ENCODE measurements at regions of chr3 and their contacts with region 1.

Region 1: GRCh38 chr3:88203642-88204055 is 53.9 kb downstream of the C3orf38 start:
- DNase-seq: peak; percentile 71 to 78
- H3K4me3 ChIP-seq: no peak overlapping the region
- H3K27ac ChIP-seq: no peak overlapping the region
- H3K4me1 ChIP-seq: no peaks in the 10 kb centered on the region
- H3K27me3 ChIP-seq: no peaks in the 10 kb centered on the region
- CTCF ChIP-seq: peak; percentile 61 to 81

Region 2: DNA sequence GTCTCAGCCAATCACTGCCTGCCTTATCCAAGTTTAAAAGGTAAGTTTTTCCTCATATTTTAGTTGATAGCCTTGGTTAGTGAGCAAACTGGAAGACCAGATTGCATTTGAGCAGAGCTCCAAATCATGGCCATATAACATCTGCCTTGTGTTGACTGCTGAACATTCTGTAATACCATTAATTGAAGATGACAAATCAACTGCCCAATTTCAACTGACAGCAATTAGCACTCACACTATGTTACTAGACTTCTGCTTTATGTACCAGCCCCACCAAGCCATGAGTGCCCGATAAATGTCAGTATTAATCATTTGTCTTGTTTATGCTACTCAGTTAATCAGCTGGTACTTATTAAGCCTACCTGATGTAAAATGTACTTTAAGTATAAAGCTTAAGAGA is 227.9 kb before region 1 on chr3:
- intact Hi-C with region 1: no loop called
- DNase-seq: no peak
- H3K4me3 ChIP-seq: no peak overlapping the region
- H3K27ac ChIP-seq: no peak overlapping the region
- H3K4me1 ChIP-seq: no peaks in the 10 kb centered on the region
- H3K27me3 ChIP-seq: no peaks in the 10 kb centered on the region
- CTCF ChIP-seq: no peak

Region 3: GRCh38 chr3:88369767-88370166 is 166.1 kb after region 1 on chr3:
- intact Hi-C with region 1: no loop called
- DNase-seq: no peak
- H3K4me3 ChIP-seq: no peak overlapping the region
- H3K27ac ChIP-seq: no peak overlapping the region
- H3K4me1 ChIP-seq: no peaks in the 10 kb centered on the region
- H3K27me3 ChIP-seq: no peaks in the 10 kb centered on the region
- CTCF ChIP-seq: no peak

Region 4: DNA sequence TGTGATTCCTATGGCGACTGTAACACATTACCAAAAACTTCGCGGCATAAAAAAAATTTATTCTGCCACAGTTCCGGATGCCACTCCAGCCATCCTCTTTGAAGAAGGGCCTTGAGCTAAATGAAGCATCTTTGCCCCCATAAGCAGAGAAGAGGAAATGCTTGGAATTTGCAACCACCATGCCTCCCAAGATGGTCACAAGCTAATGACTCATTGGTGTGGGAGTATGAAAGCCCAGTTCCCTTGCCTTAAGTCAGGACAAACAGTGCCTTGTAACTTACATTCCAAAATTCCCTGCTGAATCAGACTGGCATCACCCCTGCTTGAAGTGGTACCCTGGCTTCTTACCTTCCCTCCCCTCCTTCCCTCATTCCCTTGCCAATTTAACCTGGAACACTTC is 1981.2 kb after region 1 on chr3:
- intact Hi-C with region 1: loop called (anchors 5 kb)
- DNase-seq: no peak
- H3K4me3 ChIP-seq: no peak overlapping the region
- H3K27ac ChIP-seq: no peak overlapping the region
- H3K4me1 ChIP-seq: peaks cover 0 to 3% (median 0%) of the 10 kb centered on the region in 4 donors
- H3K27me3 ChIP-seq: no peaks in the 10 kb centered on the region
- CTCF ChIP-seq: no peak